ENCODE measurements at regions of chr18 and their contacts with region 1.

Region 1: GRCh38 chr18:9943311-9943710 is 29.5 kb downstream of the VAPA start:
- DNase-seq: no peak
- H3K4me3 ChIP-seq: no peak overlapping the region
- H3K27ac ChIP-seq: no peak overlapping the region
- H3K4me1 ChIP-seq: no peaks in the 10 kb centered on the region
- H3K27me3 ChIP-seq: no peaks in the 10 kb centered on the region
- CTCF ChIP-seq: no peak

Region 2: GRCh38 chr18:8948471-8949149 is 994.7 kb before region 1 on chr18:
- CTCF ChIA-PET with region 1: no interaction called
- POLR2A ChIA-PET with region 1: no interaction called
- intact Hi-C with region 1: no loop called
- DNase-seq: peak; percentile 54 to 80
- H3K4me3 ChIP-seq: no peak overlapping the region
- H3K27ac ChIP-seq: peak overlapping the region; percentile 20; the same call in 1 of the 2 replicates
- H3K4me1 ChIP-seq: peaks cover 53% of the 10 kb centered on the region
- H3K27me3 ChIP-seq: no peaks in the 10 kb centered on the region
- CTCF ChIP-seq: no peak

Region 3: GRCh38 chr18:9792565-9793245 is 150.6 kb before region 1 on chr18:
- CTCF ChIA-PET with region 1: no interaction called
- POLR2A ChIA-PET with region 1: interaction called, 10 read pairs
- intact Hi-C with region 1: no loop called
- DNase-seq: no peak
- H3K4me3 ChIP-seq: no peak overlapping the region
- H3K27ac ChIP-seq: no peak overlapping the region
- H3K4me1 ChIP-seq: no peaks in the 10 kb centered on the region
- H3K27me3 ChIP-seq: no peaks in the 10 kb centered on the region
- CTCF ChIP-seq: peak; percentile 61

Region 4: DNA sequence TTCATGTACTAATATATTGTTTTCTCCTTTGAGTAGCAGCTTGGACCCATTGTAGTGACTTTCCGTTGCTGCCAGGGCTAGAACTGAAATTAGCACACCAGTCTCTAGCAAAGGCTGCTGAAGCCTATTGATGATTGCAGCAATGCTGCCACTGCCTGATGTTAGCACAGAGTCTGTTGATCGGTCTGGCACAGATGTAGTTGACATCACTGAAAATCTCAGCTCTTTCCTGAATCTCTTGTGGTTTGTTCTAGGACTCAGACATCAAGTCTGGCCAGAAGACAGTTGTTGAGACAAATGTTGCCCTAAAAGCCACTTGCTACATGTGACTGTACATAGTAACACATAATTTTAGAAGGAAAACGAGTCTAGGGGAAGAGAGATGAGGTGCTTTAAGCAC is 17.7 kb after region 1 on chr18:
- CTCF ChIA-PET with region 1: no interaction called
- POLR2A ChIA-PET with region 1: no interaction called
- intact Hi-C with region 1: no loop called
- DNase-seq: no peak
- H3K4me3 ChIP-seq: no peak overlapping the region
- H3K27ac ChIP-seq: no peak overlapping the region
- H3K4me1 ChIP-seq: peaks cover 7% of the 10 kb centered on the region; the same call in 1 of the 2 replicates
- H3K27me3 ChIP-seq: no peaks in the 10 kb centered on the region
- CTCF ChIP-seq: no peak

Measured in PC-9 (cell line).